ENCODE measurements at regions of chrX and their contacts with region 1.

Region 1: GRCh38 chrX:57286507-57287251 is at the start of gene FAAH2:
- DNase-seq: peak; percentile 80
- H3K4me3 Mint-ChIP-seq: peak within 1 kb of the TSS; percentile 91
- H3K27ac Mint-ChIP-seq: peak within 1 kb of the TSS; percentile 95
- H3K4me1 Mint-ChIP-seq: peaks cover 34% of the 10 kb centered on the region
- H3K27me3 Mint-ChIP-seq: no peaks in the 10 kb centered on the region
- total RNA-seq, gene FAAH2: 10.3 to 12.1 TPM

Region 2: GRCh38 chrX:56764153-56764974 is 522.3 kb before region 1 on chrX:
- CTCF ChIA-PET with region 1: interaction called, 3 read pairs
- POLR2A ChIA-PET with region 1: no interaction called
- intact Hi-C with region 1: loop called (anchors 10 kb)
- DNase-seq: peak; percentile 75
- H3K4me3 Mint-ChIP-seq: peak overlapping the region; percentile 72
- H3K27ac Mint-ChIP-seq: peak overlapping the region; percentile 90
- H3K4me1 Mint-ChIP-seq: peaks cover 49% of the 10 kb centered on the region
- H3K27me3 Mint-ChIP-seq: no peaks in the 10 kb centered on the region

Region 3: DNA sequence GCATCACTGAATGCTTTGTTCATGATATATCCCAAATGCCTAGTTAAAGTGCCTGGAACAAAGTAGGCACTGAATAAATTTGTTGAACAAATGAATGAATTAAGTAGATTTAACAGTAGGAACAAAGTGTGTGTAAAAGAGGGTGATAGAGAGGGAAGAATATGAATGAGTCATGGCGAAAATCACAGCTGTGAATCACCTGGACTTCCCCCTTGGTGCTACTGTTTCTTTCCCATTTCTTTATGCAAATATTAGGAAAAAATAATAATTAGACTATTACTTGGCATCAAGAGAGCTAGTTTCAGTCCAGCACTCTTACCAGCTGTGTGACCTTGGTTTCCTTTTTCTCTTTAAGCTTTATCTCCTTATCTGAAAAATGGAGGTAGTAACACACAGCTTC is 300.5 kb before region 1 on chrX:
- CTCF ChIA-PET with region 1: no interaction called
- POLR2A ChIA-PET with region 1: no interaction called
- intact Hi-C with region 1: loop called (anchors 5 kb)
- DNase-seq: peak; percentile 11
- H3K4me3 Mint-ChIP-seq: no peak overlapping the region
- H3K27ac Mint-ChIP-seq: no peak overlapping the region
- H3K4me1 Mint-ChIP-seq: peaks cover 15% of the 10 kb centered on the region
- H3K27me3 Mint-ChIP-seq: no peaks in the 10 kb centered on the region

Region 4: GRCh38 chrX:57364145-57364544 is 77.5 kb after region 1 on chrX:
- CTCF ChIA-PET with region 1: no interaction called
- POLR2A ChIA-PET with region 1: no interaction called
- intact Hi-C with region 1: loop called (anchors 1 kb)
- DNase-seq: no peak
- H3K4me3 Mint-ChIP-seq: no peak overlapping the region
- H3K27ac Mint-ChIP-seq: peak overlapping the region; percentile 36
- H3K4me1 Mint-ChIP-seq: peaks cover 17% of the 10 kb centered on the region
- H3K27me3 Mint-ChIP-seq: no peaks in the 10 kb centered on the region

Region 5: DNA sequence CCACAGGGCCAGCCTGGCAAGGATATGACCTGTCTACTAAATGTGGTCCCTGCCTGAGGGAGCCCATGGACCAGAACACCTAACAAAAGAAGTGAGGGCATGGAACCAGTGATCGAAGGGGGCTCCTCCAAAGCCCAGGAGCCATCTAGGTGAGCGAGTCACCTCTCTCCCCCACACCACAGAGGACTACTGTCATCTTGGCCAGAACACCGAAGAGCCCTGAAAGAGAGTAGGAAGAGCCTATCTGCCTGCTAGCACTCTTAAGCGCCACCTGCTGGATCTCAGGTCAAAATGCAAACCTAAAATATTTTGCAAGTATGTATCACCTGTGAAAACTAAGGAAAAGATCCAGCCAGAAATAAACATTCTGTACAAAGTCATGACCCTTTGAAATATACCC is 167.2 kb after region 1 on chrX:
- CTCF ChIA-PET with region 1: interaction called, 12 read pairs
- POLR2A ChIA-PET with region 1: no interaction called
- intact Hi-C with region 1: loop called (anchors 1 kb)
- DNase-seq: peak; percentile 13
- H3K4me3 Mint-ChIP-seq: no peak overlapping the region
- H3K27ac Mint-ChIP-seq: peak overlapping the region; percentile 38
- H3K4me1 Mint-ChIP-seq: no peaks in the 10 kb centered on the region
- H3K27me3 Mint-ChIP-seq: no peaks in the 10 kb centered on the region

Region 6: DNA sequence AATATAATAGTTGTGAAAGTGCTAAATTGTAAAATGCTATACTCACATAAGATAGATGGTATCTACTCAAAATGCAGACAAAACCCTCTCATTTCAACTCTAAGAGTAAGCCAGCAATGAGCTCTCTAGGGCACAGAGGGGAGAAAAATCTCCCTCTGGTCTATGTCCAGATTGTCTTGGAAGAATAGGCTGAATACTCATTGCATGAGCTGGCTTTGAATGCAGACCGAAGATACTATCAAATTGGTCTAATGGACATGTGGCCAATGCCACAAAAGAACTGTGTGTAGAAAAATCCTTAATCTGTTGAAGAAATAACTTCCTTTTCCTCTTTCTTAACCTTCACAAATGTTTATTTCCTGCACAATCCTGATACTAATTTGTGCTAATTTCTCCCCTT is 620.1 kb after region 1 on chrX:
- CTCF ChIA-PET with region 1: no interaction called
- POLR2A ChIA-PET with region 1: no interaction called
- intact Hi-C with region 1: loop called (anchors 5 kb)
- DNase-seq: no peak
- H3K4me3 Mint-ChIP-seq: peak overlapping the region; percentile 46
- H3K27ac Mint-ChIP-seq: peak overlapping the region; percentile 33
- H3K4me1 Mint-ChIP-seq: peaks cover 43% of the 10 kb centered on the region
- H3K27me3 Mint-ChIP-seq: no peaks in the 10 kb centered on the region

Measured in activated CD4-positive, alpha-beta memory T cell treated with anti-CD3 and anti-CD28 coated beads for 36 hours (primary cell).